WTC11 (cell line): ENCODE measurements at regions of chr7 and their contacts with region 1.

Region 1: DNA sequence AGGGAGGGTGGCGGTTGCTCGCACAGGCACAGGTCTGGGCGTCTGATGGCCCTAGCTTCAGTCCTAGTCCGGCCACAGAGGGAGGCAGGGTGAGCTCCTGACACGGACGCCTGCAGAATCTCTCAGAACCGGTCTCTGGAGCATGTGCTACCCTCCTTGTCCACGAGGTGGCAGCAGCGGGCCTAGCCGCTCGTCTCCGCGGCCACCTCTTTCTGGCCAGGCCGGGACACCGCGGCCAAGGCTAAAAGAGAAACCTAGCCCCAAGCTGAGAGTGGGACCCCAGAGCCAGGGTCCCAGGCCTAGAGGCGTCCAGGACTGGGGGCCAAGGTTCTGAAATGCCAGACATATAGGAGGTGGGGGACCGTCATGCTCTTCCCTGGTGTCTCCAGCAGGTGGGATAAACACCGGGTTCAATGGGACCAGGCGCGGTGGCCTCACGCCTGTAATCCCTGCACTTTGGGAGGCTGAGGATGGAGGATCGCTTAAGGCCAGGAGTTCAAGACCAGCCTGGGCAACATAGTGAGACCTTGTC is 3.2 kb upstream of the LAT2 start:
- DNase-seq: peak; percentile 95
- ATAC-seq: peak; percentile 91
- H3K4me3 Mint-ChIP-seq: no peak overlapping the region
- H3K27ac Mint-ChIP-seq: no peak overlapping the region
- H3K4me1 Mint-ChIP-seq: no peaks in the 10 kb centered on the region
- H3K27me3 Mint-ChIP-seq: no peaks in the 10 kb centered on the region; the same call in 1 of the 2 replicates
- CTCF ChIP-seq: peak; percentile 98

Region 2: GRCh38 chr7:73921623-73922528 is 284.8 kb before region 1 on chr7:
- CTCF ChIA-PET with region 1: no interaction called
- POLR2A ChIA-PET with region 1: no interaction called
- DNase-seq: no peak
- ATAC-seq: no peak
- H3K4me3 Mint-ChIP-seq: no peak overlapping the region
- H3K27ac Mint-ChIP-seq: no peak overlapping the region
- H3K4me1 Mint-ChIP-seq: peaks cover 28% of the 10 kb centered on the region
- H3K27me3 Mint-ChIP-seq: no peaks in the 10 kb centered on the region
- CTCF ChIP-seq: no peak

Region 3: GRCh38 chr7:73936967-73937366 is 269.7 kb before region 1 on chr7:
- CTCF ChIA-PET with region 1: no interaction called
- POLR2A ChIA-PET with region 1: no interaction called
- DNase-seq: no peak
- ATAC-seq: no peak
- H3K4me3 Mint-ChIP-seq: no peak overlapping the region
- H3K27ac Mint-ChIP-seq: no peak overlapping the region
- H3K4me1 Mint-ChIP-seq: no peaks in the 10 kb centered on the region
- H3K27me3 Mint-ChIP-seq: peaks cover 5% of the 10 kb centered on the region
- CTCF ChIP-seq: no peak

Region 4: DNA sequence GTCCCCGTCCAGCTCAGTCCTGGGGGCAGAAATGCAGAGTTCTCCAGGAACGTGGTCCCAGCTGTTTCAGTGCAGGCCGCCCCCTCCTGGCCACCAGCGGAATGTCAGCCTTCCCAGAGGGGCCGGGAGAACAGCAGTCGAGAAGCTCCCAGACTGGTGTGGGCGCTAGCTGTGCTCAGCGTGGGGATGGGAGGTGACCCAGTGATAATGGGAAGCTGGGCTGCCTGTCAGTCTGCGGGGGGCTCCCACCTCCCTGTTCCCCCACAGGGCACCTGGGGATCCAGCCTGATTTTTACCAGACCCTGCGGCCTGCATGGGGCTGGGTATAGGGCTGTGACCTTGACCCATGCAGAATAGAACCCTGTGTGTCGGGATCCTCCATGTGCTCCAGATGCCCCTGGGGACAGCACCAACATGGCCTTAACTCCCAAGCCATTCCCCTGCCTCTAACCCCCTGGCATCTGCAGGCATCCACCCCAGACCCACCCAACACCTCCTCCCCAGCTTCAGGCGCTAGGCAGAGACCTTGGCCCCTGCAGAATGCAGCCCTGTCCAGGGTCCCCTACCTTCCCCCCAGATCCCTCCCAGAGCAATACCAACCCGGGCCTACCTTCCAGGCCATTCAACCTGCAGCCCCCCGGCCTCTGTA is 179.6 kb before region 1 on chr7:
- CTCF ChIA-PET with region 1: interaction called, 12 read pairs
- POLR2A ChIA-PET with region 1: no interaction called
- DNase-seq: peak; percentile 90
- ATAC-seq: peak; percentile 73
- H3K4me3 Mint-ChIP-seq: no peak overlapping the region
- H3K27ac Mint-ChIP-seq: no peak overlapping the region
- H3K4me1 Mint-ChIP-seq: peaks cover 36% of the 10 kb centered on the region
- H3K27me3 Mint-ChIP-seq: peaks cover 10% of the 10 kb centered on the region
- CTCF ChIP-seq: peak; percentile 90

Region 5: GRCh38 chr7:74083117-74083876 is 123.4 kb before region 1 on chr7 and contains the start of gene LIMK1:
- CTCF ChIA-PET with region 1: interaction called, 16 read pairs
- POLR2A ChIA-PET with region 1: no interaction called
- DNase-seq: peak; percentile 75
- ATAC-seq: peak; percentile 70
- H3K4me3 Mint-ChIP-seq: peak within 1 kb of the TSS; percentile 76
- H3K27ac Mint-ChIP-seq: no peak within 1 kb of the TSS; the same call in 1 of the 2 replicates
- H3K4me1 Mint-ChIP-seq: peaks cover 26% of the 10 kb centered on the region
- H3K27me3 Mint-ChIP-seq: no peaks in the 10 kb centered on the region; the same call in 1 of the 2 replicates
- CTCF ChIP-seq: no peak
- total RNA-seq, gene LIMK1: 85.4 to 92.1 TPM (median 90.6 TPM) in 3 replicates

Region 6: DNA sequence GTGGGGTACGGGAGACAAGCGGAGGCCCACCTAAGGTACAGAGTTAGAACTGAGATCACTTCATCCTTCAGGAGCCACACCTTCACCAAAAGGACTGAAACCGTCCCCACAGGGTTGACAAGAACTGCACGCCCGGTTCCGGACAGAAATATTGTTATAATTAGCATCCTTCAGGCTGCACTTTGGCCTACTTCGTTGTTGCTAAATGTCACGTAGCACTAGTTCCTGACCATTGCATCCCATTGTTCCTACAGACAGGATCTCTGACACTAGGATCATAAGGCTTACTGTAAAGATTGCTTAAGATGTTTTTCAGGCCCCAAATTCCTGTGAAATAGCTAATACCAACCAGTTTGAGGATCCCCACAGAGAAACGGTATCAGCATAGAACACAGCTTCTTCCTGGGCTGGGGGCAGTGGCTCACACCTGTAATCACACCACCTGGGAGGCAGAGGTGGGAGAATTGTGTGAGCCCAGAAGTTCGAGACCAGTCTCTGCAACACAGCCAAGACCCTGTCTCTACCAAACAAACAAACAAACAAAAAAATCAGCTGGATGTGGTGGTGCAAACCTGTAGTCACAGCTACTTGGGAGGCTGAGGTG is 50.8 kb before region 1 on chr7:
- CTCF ChIA-PET with region 1: no interaction called
- POLR2A ChIA-PET with region 1: no interaction called
- DNase-seq: no peak
- ATAC-seq: no peak
- H3K4me3 Mint-ChIP-seq: no peak overlapping the region
- H3K27ac Mint-ChIP-seq: peak overlapping the region; percentile 49; the same call in 1 of the 2 replicates
- H3K4me1 Mint-ChIP-seq: no peaks in the 10 kb centered on the region; the same call in 1 of the 2 replicates
- H3K27me3 Mint-ChIP-seq: no peaks in the 10 kb centered on the region
- CTCF ChIP-seq: no peak

Region 7: DNA sequence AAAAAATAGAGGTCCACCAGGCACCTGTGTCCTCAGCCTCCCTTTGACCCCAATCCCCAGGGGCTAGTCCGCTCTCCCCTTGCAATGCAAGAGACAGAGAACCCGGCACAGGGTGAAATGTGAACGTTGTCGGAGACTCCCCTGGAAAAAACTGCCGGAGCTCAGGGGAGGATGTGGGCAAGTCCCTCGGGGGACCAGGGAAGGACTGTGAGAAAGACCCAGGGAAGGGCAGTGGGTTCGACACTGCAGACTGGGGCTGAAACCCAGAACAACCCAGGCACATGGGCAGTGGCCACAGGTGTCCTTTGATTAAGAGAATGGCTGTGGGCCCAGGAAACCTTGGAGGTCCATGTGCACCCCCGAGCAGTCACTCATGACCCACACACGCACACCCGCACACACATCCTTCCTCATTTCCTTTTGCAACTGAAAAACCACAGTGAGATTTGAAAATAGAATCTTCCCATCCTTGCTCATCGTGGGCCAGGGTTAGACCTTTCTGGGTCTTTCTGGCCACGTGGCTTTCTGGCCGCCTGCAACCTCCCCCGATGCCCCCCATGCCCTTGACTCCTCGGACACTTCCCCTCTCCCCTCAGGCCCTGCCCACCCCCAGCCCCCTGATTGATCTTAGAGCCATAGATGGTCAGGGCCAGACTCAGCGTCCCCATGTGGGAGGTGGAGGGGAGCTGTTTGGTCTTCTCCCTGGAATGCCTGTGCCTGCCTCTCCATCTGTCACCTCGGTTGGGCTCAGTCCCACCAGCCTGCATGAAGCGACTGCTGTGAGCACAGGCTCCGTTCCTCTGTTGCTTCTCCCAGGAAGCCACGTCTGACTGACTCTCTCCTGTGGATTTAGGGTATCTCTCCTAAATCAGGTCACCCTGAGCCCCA is 11.0 kb after region 1 on chr7:
- CTCF ChIA-PET with region 1: interaction called, 54 read pairs
- POLR2A ChIA-PET with region 1: no interaction called
- DNase-seq: no peak
- ATAC-seq: no peak
- H3K4me3 Mint-ChIP-seq: no peak overlapping the region
- H3K27ac Mint-ChIP-seq: no peak overlapping the region
- H3K4me1 Mint-ChIP-seq: no peaks in the 10 kb centered on the region
- H3K27me3 Mint-ChIP-seq: no peaks in the 10 kb centered on the region
- CTCF ChIP-seq: no peak

Region 8: DNA sequence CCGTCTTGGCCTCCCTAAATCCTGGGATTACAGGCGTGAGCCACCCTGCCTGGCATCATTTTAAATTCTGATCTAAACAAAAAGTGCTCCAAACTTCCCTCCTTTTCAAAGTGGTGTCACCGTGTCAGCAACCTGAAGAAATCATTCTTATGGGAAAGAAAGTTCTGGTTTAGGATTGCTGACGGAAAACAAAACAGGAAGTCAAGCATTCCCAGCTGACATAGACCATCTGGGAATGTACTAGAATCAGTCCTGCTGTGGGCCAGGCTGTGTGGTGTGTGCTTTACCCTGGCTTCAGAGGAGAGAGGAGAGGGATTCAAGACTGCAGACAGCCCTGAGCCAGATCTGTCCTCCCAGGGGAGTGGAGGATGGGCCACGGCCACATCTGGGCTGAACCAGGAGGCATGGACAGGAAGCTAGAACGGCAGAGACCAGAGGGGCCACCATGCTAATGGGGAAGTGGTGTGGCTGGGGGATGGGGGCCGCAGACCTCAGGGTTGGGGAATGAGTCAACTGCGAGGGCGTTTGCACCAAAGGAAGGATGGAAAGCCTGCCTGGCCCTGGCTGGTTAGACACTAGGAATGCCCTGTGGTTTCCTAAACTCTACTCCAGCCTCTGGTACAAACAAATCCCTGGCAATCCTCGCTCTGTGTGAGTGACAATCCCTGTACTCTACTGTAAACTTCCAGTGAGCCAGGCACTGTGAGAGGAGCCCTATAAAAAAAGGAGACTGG is 65.8 kb after region 1 on chr7:
- CTCF ChIA-PET with region 1: interaction called, 20 read pairs
- POLR2A ChIA-PET with region 1: interaction called, 3 read pairs
- DNase-seq: peak; percentile 62
- ATAC-seq: peak; percentile 62
- H3K4me3 Mint-ChIP-seq: no peak overlapping the region
- H3K27ac Mint-ChIP-seq: peak overlapping the region; percentile 95
- H3K4me1 Mint-ChIP-seq: peaks cover 26% of the 10 kb centered on the region
- H3K27me3 Mint-ChIP-seq: no peaks in the 10 kb centered on the region
- CTCF ChIP-seq: no peak

Region 9: DNA sequence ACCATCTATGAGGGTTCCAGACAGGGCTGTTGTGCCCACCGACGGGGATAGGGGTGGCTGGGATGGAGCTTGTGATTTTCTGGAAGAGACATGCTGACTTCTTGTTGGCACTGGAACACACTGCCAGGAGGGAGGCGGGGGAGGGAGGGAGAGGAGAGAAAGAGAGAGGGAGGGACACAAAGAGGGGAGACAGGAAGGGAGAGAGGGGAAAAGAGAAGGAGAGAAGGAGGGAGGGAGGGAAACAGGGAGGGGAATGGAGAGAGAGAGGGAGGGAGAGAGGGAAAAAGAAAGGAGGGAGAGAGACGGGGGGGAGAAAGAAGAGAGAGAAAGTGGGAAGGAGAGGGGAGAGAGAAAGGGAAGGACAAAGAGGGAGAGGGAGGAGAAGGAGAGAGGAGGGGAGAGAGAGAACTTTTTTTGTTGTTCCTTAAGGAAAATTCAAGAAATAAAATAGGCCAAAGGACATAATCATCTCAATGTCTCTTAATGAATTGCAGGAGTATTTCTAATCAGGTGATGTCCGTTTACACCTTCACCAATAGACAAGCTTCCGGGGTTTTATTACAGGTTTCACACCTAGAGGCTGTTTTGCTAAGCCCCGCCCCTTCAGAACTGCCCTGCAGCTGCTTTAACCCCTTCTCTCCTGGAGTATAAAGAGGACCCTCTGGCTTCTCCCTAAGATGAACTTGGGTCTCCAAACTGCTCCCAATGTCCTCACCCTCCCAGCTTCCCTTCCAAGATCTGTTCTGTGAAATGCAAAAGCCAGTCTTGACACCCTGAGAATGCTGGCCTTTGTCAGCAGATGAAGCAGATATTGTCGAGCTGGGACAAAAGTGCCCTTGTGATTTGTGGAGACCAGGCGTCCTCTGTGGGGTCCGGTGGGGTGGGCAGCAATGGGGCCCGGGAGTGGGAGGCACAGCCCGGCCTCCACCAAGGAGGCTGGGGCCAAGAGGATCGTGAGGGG is 165.0 kb after region 1 on chr7:
- CTCF ChIA-PET with region 1: interaction called, 12 read pairs
- POLR2A ChIA-PET with region 1: no interaction called
- DNase-seq: peak; percentile 61
- ATAC-seq: peak; percentile 62
- H3K4me3 Mint-ChIP-seq: peak overlapping the region; percentile 69
- H3K27ac Mint-ChIP-seq: peak overlapping the region; percentile 91
- H3K4me1 Mint-ChIP-seq: peaks cover 27% of the 10 kb centered on the region
- H3K27me3 Mint-ChIP-seq: no peaks in the 10 kb centered on the region
- CTCF ChIP-seq: no peak

Region 10: GRCh38 chr7:74401137-74401859 is 194.6 kb after region 1 on chr7:
- CTCF ChIA-PET with region 1: interaction called, 275 read pairs
- POLR2A ChIA-PET with region 1: no interaction called
- DNase-seq: peak; percentile 93
- ATAC-seq: peak; percentile 63
- H3K4me3 Mint-ChIP-seq: no peak overlapping the region
- H3K27ac Mint-ChIP-seq: no peak overlapping the region
- H3K4me1 Mint-ChIP-seq: peaks cover 5% of the 10 kb centered on the region; the same call in 1 of the 2 replicates
- H3K27me3 Mint-ChIP-seq: no peaks in the 10 kb centered on the region; the same call in 1 of the 2 replicates
- CTCF ChIP-seq: peak; percentile 97